B cell (primary cell): ENCODE measurements at regions of chr10 and their contacts with region 1.

Region 1: DNA sequence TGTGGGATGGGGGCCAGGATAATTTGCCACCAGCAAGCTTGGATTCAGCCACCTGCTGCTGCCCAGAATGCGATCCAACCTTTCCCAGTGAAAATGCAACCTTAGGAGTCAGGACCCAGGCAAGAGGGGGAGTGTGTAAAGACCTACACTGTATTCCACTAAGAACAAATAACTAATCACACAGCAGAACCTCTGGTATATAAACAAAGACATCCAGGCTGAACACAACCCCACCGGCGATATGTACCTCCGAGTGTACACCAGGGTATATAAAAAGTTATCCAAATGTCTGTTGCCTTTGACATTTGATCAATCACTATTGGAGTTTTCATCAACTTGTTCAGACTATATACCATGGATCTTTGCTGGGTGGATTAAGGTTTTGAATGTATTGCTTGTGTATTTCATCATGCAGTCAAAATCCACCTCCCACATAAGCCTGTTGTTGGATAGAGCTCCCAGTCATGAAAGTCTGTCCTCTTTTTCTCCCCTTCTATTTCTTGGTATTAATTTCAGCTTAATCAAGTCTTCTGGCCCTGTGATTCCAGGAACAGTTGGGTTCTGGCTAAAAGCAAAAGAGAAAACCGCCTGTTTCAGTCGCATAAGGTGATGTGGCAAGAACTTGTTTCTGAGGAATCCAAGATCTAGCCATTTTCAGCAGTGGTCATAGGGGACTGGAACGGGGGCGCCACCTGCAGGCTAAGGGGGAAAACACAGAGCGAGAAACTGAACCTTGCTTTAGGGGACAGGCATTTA is 290.7 kb downstream of the CCDC3 start:
- DNase-seq: peak; percentile 81
- ATAC-seq: peak; percentile 88
- H3K4me3 ChIP-seq: no peak overlapping the region
- H3K4me3 Mint-ChIP-seq: no peak overlapping the region
- H3K27ac ChIP-seq: peak overlapping the region in 1 of 2 donors; percentile 54
- H3K27ac Mint-ChIP-seq: peak overlapping the region; percentile 59
- H3K4me1 ChIP-seq: peaks cover 0 to 3% of the 10 kb centered on the region in 2 donors
- H3K4me1 Mint-ChIP-seq: peaks cover 16% of the 10 kb centered on the region
- H3K27me3 ChIP-seq: no peaks in the 10 kb centered on the region
- H3K27me3 Mint-ChIP-seq: no peaks in the 10 kb centered on the region
- CTCF ChIP-seq: peak; percentile 98

Region 2: DNA sequence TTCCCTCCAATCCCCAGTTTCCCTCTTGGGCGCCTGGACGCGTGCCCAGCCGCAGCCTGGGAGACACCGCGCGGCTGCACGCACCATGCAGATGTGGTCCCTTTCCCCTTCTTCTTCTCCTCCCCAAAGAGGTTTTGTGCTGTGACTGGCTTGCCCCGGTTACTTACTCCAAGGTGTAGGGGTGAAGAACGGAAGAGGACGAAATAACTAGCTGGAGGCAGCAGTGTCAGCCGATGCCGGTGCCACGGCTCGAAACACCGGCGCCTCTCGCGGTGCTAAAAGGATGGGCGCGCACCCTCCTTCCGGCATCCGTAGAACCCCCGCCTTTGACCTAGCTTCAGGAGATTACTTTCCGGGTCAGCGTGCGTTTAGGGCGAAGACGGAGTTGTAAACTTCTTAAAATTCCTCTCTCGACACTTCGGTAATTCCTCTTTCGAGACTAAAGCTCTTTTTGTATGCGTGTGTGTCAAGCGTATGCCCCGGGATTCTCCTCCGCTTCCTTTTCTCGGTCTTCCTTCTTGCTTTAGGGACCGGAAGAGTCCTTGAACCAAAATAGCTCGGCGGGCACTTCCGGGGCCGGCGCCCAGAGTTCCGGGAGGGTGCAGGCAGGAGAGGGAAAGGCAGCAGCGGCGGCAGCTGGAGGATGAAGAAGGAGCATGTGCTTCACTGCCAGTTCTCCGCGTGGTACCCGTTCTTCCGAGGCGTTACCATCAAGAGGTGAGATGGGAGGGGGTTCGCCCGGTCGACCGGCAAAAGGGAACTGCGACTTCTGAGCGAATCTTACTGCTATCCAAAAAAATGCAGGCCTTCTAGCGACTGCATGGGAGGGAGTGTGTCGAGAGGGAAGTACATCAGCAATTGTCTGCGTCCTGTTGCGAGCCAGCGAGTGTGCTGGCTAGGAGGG is 514.9 kb before region 1 on chr10 and contains the starts of genes CDC123 and NUDT5:
- CTCF ChIA-PET with region 1: interaction called, 5 read pairs
- POLR2A ChIA-PET with region 1: no interaction called
- intact Hi-C with region 1: loop called (anchors 1 kb)
- DNase-seq: peak; percentile 93
- ATAC-seq: peak; percentile 90
- H3K4me3 ChIP-seq: peak within 1 kb of the TSS; percentile 87 to 97 (median 95)
- H3K4me3 Mint-ChIP-seq: peak within 1 kb of the TSS; percentile 93
- H3K27ac ChIP-seq: peak within 1 kb of the TSS; percentile 91 to 94
- H3K27ac Mint-ChIP-seq: peak within 1 kb of the TSS; percentile 99
- H3K4me1 ChIP-seq: peaks cover 18 to 24% of the 10 kb centered on the region in 2 donors
- H3K4me1 Mint-ChIP-seq: peaks cover 42% of the 10 kb centered on the region
- H3K27me3 ChIP-seq: no peaks in the 10 kb centered on the region
- H3K27me3 Mint-ChIP-seq: no peaks in the 10 kb centered on the region
- CTCF ChIP-seq: no peak
- total RNA-seq, gene CDC123: 56.0 and 62.0 TPM in 2 replicates
- total RNA-seq, gene NUDT5: 39.1 and 39.9 TPM in 2 replicates

Region 3: GRCh38 chr10:12252882-12253546 is 457.8 kb before region 1 on chr10:
- CTCF ChIA-PET with region 1: interaction called, 29 read pairs
- POLR2A ChIA-PET with region 1: no interaction called
- intact Hi-C with region 1: loop called (anchors 1 kb)
- DNase-seq: peak; percentile 86
- ATAC-seq: peak; percentile 99
- H3K4me3 ChIP-seq: peak overlapping the region in 2 of 5 experiments; percentile 23 to 53
- H3K4me3 Mint-ChIP-seq: peak overlapping the region; percentile 83
- H3K27ac ChIP-seq: peak overlapping the region; percentile 57
- H3K27ac Mint-ChIP-seq: peak overlapping the region; percentile 93
- H3K4me1 ChIP-seq: peaks cover 14% of the 10 kb centered on the region in 2 donors
- H3K4me1 Mint-ChIP-seq: peaks cover 17% of the 10 kb centered on the region
- H3K27me3 ChIP-seq: no peaks in the 10 kb centered on the region
- H3K27me3 Mint-ChIP-seq: no peaks in the 10 kb centered on the region
- CTCF ChIP-seq: peak; percentile 82

Region 4: GRCh38 chr10:12322583-12323131 is 388.1 kb before region 1 on chr10:
- CTCF ChIA-PET with region 1: interaction called, 6 read pairs
- POLR2A ChIA-PET with region 1: no interaction called
- intact Hi-C with region 1: loop called (anchors 1 kb)
- DNase-seq: no peak
- ATAC-seq: no peak
- H3K4me3 ChIP-seq: no peak overlapping the region
- H3K4me3 Mint-ChIP-seq: no peak overlapping the region
- H3K27ac ChIP-seq: no peak overlapping the region
- H3K27ac Mint-ChIP-seq: no peak overlapping the region
- H3K4me1 ChIP-seq: peaks cover 4 to 15% of the 10 kb centered on the region in 2 donors
- H3K4me1 Mint-ChIP-seq: peaks cover 29% of the 10 kb centered on the region
- H3K27me3 ChIP-seq: no peaks in the 10 kb centered on the region
- H3K27me3 Mint-ChIP-seq: no peaks in the 10 kb centered on the region
- CTCF ChIP-seq: no peak

Region 5: GRCh38 chr10:12787297-12787696 is 76.5 kb after region 1 on chr10:
- CTCF ChIA-PET with region 1: no interaction called
- POLR2A ChIA-PET with region 1: no interaction called
- intact Hi-C with region 1: no loop called
- DNase-seq: no peak
- ATAC-seq: no peak
- H3K4me3 ChIP-seq: no peak overlapping the region
- H3K4me3 Mint-ChIP-seq: no peak overlapping the region
- H3K27ac ChIP-seq: no peak overlapping the region
- H3K27ac Mint-ChIP-seq: no peak overlapping the region
- H3K4me1 ChIP-seq: no peaks in the 10 kb centered on the region
- H3K4me1 Mint-ChIP-seq: peaks cover 3% of the 10 kb centered on the region
- H3K27me3 ChIP-seq: no peaks in the 10 kb centered on the region
- H3K27me3 Mint-ChIP-seq: no peaks in the 10 kb centered on the region
- CTCF ChIP-seq: no peak

Region 6: GRCh38 chr10:12890958-12891357 is 180.2 kb after region 1 on chr10:
- CTCF ChIA-PET with region 1: no interaction called
- POLR2A ChIA-PET with region 1: no interaction called
- intact Hi-C with region 1: no loop called
- DNase-seq: no peak
- ATAC-seq: no peak
- H3K4me3 ChIP-seq: no peak overlapping the region
- H3K4me3 Mint-ChIP-seq: no peak overlapping the region
- H3K27ac ChIP-seq: no peak overlapping the region
- H3K27ac Mint-ChIP-seq: no peak overlapping the region
- H3K4me1 ChIP-seq: no peaks in the 10 kb centered on the region
- H3K4me1 Mint-ChIP-seq: no peaks in the 10 kb centered on the region
- H3K27me3 ChIP-seq: peaks cover 0 to 9% (median 0%) of the 10 kb centered on the region in 4 experiments
- H3K27me3 Mint-ChIP-seq: peaks cover 34% of the 10 kb centered on the region
- CTCF ChIP-seq: no peak

Region 7: DNA sequence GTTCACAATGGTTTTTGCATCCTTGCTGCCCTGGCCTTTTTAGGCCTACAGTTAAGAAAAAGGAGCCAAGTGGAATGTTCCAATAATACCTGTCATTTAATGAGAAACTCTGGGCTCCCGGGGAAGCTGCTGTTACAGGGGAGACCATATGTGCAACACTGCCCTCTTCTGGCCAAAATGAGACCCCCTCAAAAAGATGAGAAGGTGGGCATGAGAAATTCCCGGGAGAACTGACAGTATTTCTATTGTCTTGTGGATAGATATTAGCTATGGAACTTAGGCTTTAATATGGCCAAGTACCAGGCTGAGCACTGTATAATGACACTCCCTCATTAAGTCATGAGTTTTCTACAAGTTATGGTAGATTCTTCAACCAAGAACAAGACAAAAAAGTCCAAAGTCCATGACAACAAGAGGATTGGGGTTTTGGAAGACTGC is 191.4 kb after region 1 on chr10:
- CTCF ChIA-PET with region 1: interaction called, 39 read pairs
- POLR2A ChIA-PET with region 1: no interaction called
- intact Hi-C with region 1: no loop called
- DNase-seq: peak; percentile 72
- ATAC-seq: no peak
- H3K4me3 ChIP-seq: no peak overlapping the region
- H3K4me3 Mint-ChIP-seq: no peak overlapping the region
- H3K27ac ChIP-seq: no peak overlapping the region
- H3K27ac Mint-ChIP-seq: no peak overlapping the region
- H3K4me1 ChIP-seq: no peaks in the 10 kb centered on the region
- H3K4me1 Mint-ChIP-seq: no peaks in the 10 kb centered on the region
- H3K27me3 ChIP-seq: no peaks in the 10 kb centered on the region
- H3K27me3 Mint-ChIP-seq: peaks cover 17% of the 10 kb centered on the region
- CTCF ChIP-seq: peak; percentile 84